Aorta (tissue), 5 donors: ENCODE measurements at regions of chr11 and their contacts with region 1.

Region 1: DNA sequence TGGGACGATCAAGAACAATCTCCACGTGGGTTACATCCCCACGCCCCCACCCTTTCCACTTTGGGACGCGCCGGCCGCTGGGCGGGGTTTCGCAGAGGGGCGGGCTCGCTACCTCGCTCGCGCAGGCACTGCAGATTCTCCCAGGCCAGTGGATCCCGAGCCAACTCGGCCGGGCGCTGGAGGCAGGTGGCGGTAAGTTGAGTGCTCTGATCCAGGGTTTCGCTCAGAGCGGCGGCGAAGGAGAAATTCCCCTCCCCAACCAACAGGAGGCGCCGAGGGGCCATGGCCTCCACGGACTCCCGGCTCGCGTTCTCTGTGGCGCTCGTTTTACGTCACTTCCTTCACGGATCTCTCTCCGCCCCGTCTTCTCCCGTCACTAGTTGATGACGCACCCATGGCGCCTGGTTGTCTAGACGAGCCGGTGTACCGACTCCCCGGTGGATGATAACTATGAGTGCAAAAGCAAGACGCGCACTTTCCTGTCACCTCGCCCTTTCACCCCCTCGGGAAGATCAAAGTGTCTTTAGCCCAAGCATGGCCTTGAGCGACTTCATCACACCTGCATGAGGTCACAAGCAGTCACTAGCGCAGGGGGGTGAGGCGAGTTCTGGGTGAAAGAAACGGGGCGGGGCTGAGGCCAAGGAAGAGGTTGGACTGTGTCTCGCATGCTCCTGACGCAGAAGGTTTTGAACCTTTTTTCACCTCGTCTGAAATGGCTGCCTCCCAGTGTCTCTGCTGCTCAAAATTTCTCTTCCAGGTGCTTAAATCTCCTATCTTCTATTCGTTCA is at the starts of genes CFAP68 and FDXACB1:
- DNase-seq: peak; percentile 98
- ATAC-seq: peak; percentile 99
- H3K4me3 ChIP-seq: peak within 1 kb of the TSS; percentile 49 to 67
- H3K27ac ChIP-seq: peak within 1 kb of the TSS; percentile 31 to 81
- H3K4me1 ChIP-seq: peaks cover 0 to 5% of the 10 kb centered on the region in 2 donors
- H3K27me3 ChIP-seq: no peaks in the 10 kb centered on the region
- total RNA-seq, gene CFAP68: 6.6 to 15.2 TPM
- total RNA-seq, gene FDXACB1: 1.4 to 1.9 TPM

Region 2: DNA sequence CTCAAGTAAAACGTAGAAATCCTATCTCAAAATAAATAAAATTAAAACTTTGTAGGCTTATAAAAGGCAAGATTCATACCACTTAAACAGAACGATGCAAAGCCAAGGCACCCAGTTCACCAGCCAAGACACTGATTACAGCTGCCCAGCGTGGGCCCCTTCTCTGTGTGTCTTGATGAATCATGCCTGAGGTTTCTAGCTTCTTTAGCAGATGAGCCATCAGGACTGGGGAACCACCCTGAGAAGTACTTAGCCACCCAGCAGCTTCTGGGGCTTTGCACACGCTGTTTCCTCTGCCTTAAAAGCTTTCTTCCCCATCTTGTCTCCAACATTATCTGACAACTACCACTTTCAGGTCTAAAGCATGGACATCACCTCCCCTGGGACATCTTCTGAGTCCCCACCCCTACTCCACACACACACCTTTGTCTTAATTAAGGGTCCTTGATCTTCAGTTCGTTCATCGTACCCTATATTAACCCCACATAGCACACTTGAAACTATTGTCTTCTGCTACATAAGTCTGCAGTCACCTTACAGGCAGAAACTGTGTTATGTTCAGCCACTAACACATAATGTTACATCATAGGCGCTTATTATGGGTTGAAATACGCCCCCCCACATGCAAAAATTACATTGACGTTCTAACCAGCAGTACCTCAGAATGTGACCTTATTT is 347.2 kb before region 1 on chr11:
- intact Hi-C with region 1: no loop called
- DNase-seq: no peak
- ATAC-seq: no peak
- H3K4me3 ChIP-seq: no peak overlapping the region
- H3K27ac ChIP-seq: no peak overlapping the region
- H3K4me1 ChIP-seq: no peaks in the 10 kb centered on the region
- H3K27me3 ChIP-seq: no peaks in the 10 kb centered on the region

Region 3: DNA sequence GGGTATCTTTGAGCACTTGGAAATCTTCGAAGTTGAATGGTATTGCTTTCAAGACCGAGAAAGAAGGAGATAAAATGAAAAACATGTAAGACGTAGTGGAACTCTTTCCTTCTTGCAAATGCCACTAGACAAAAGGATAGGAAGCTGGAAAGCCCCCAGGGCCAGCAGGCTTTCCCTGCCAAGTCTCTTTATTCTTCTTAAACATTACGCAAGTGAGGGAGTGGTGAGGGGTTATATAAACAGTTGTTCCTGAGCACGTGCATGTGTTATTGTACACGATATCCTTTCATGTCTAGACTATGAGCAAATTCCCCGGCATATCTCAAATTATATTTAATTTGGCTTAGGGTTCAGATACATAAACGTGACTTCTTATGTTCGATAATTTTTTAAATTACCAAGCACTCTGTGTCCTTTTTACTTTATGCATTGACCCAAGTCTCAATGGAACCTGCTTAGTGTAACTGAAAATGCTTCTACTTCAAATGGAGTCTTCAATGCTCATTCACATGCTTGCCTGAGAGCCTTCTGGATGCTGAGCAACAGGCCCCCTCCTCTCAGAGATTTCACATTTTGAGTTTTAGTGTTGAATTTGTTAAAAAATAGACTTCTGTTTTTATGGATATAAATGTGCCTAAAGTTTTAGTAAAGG is 171.9 kb before region 1 on chr11:
- intact Hi-C with region 1: no loop called
- DNase-seq: peak in 1 of 2 donors; percentile 54
- ATAC-seq: peak; percentile 77
- H3K4me3 ChIP-seq: no peak overlapping the region
- H3K27ac ChIP-seq: no peak overlapping the region
- H3K4me1 ChIP-seq: no peaks in the 10 kb centered on the region
- H3K27me3 ChIP-seq: no peaks in the 10 kb centered on the region

Region 4: GRCh38 chr11:111766093-111766833 is 112.8 kb before region 1 on chr11 and contains the start of gene PPP2R1B:
- intact Hi-C with region 1: no loop called
- DNase-seq: peak; percentile 78 to 89
- ATAC-seq: peak; percentile 98
- H3K4me3 ChIP-seq: peak within 1 kb of the TSS; percentile 68 to 88
- H3K27ac ChIP-seq: peak within 1 kb of the TSS; percentile 16 to 91
- H3K4me1 ChIP-seq: no peaks in the 10 kb centered on the region
- H3K27me3 ChIP-seq: no peaks in the 10 kb centered on the region
- total RNA-seq, gene PPP2R1B: 21.9 to 27.2 TPM

Region 5: GRCh38 chr11:111911563-111912401 is 32.7 kb after region 1 on chr11 and contains the start of gene CRYAB:
- intact Hi-C with region 1: loop called (anchors 1 to 2 kb)
- DNase-seq: peak; percentile 92 to 95
- ATAC-seq: peak; percentile 87
- H3K4me3 ChIP-seq: peak within 1 kb of the TSS; percentile 79 to 98
- H3K27ac ChIP-seq: peak within 1 kb of the TSS; percentile 97 to 98
- H3K4me1 ChIP-seq: peaks cover 0 to 6% of the 10 kb centered on the region in 2 donors
- H3K27me3 ChIP-seq: no peaks in the 10 kb centered on the region
- total RNA-seq, gene CRYAB: 323 to 2,347 TPM

Region 6: DNA sequence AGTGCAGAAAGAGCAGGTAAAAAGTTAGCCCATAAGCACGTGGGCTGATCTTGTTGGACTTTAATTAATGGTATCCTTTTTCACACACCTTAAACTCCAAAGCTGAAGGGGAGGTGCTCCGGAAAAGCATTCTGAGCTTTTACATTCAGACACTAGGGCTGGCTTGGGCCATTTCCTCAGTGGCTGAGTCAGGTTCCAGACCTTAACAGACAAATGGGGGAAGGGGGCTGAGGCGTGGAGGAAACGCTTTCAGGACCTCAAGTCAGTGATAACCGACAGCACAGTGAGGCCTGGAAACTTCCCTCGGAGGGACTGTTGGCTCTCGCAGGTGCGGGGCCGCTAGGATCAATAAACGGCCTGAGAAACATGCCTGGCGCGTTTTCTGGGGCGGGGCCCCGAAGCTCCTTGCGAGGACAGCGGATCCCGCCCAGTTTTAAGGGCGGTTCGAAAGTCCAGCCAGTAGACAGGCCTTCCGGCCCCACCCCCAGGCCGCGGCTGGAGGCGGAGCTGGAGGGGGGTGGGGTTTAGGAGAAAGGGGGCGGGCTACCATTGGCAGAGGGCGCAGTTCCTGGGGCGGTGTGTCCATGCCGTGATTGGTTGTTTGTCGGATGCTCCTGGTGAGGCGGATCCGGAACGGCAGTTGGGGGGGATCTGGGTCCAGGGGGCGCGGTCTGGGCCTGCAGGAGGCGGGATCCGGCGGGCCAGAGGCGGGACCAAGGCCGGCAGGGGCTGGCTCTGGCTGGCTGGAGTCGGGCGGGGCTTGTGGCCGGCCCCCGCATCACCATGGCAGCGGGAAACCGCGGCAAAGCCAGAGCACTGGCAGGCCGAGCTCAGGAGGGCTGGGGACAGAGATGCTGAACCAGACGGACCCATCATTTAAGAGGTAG is 47.7 kb after region 1 on chr11:
- intact Hi-C with region 1: loop called (anchors 1 to 5 kb)
- DNase-seq: peak; percentile 97 to 98
- ATAC-seq: peak; percentile 97
- H3K4me3 ChIP-seq: no peak overlapping the region
- H3K27ac ChIP-seq: peak overlapping the region in 1 of 2 donors; percentile 95
- H3K4me1 ChIP-seq: peaks cover 0 to 6% of the 10 kb centered on the region in 2 donors
- H3K27me3 ChIP-seq: no peaks in the 10 kb centered on the region

Region 7: GRCh38 chr11:111938687-111939160 is 59.7 kb after region 1 on chr11:
- intact Hi-C with region 1: loop called in 1 of 2 experiments (anchors 5 kb)
- DNase-seq: no peak
- ATAC-seq: peak; percentile 36
- H3K4me3 ChIP-seq: no peak overlapping the region
- H3K27ac ChIP-seq: peak overlapping the region; percentile 44 to 67
- H3K4me1 ChIP-seq: peaks cover 0 to 2% of the 10 kb centered on the region in 2 donors
- H3K27me3 ChIP-seq: no peaks in the 10 kb centered on the region

Region 8: DNA sequence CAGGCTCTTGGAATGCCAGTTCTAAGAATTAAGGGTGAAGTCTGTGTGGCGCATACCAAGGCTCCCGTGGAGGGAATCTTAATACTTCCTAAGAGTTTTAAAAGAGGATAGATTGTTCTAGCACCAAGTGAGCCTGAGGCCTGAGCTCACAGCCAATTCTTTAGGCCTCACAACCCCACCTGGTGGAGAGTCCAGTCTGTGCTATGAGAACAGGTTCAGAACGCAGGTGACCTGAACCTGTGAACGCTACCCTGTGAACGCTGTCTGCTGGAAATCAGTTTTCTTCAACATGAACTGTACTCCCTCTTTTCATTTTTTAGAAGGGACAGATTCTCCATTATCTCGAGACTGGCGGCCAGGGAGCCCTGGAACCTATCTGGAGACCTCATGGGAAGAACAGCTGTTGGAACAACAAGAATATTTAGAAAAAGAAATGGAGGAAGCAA is 103.0 kb after region 1 on chr11:
- intact Hi-C with region 1: loop called (anchors 1 to 5 kb)
- DNase-seq: peak in 1 of 2 donors; percentile 53
- ATAC-seq: no peak
- H3K4me3 ChIP-seq: no peak overlapping the region
- H3K27ac ChIP-seq: no peak overlapping the region
- H3K4me1 ChIP-seq: peaks cover 0 to 4% of the 10 kb centered on the region in 2 donors
- H3K27me3 ChIP-seq: no peaks in the 10 kb centered on the region

Region 9: GRCh38 chr11:112074026-112074811 is 195.2 kb after region 1 on chr11 and contains the start of gene NKAPD1:
- intact Hi-C with region 1: loop called (anchors 10 kb)
- DNase-seq: peak; percentile 83 to 89
- ATAC-seq: peak; percentile 93
- H3K4me3 ChIP-seq: peak within 1 kb of the TSS; percentile 22 to 87
- H3K27ac ChIP-seq: peak within 1 kb of the TSS in 1 of 2 donors; percentile 66
- H3K4me1 ChIP-seq: no peaks in the 10 kb centered on the region
- H3K27me3 ChIP-seq: no peaks in the 10 kb centered on the region
- total RNA-seq, gene NKAPD1: 14.7 to 16.3 TPM